Activated T-helper 1 cell treated with anti-CD3 and anti-CD28 coated beads, Interleukin-12 subunit alpha, Interleukin-12 subunit beta, Interleukin-2, Interleukin-4 antibody, amounts not matched to agents 30 ng/mL and 10 ng/mL and 1 ng/mL, durations not matched to agents 14 hours and 24 hours and 36 hours (primary cell): ENCODE measurements at regions of chr5 and their contacts with region 1.

Region 1: GRCh38 chr5:147453875-147454814 is 55.7 kb downstream of the DPYSL3 start:
- DNase-seq: peak; percentile 55
- H3K4me3 Mint-ChIP-seq: peak overlapping the region; percentile 80
- H3K27ac Mint-ChIP-seq: no peak overlapping the region
- H3K4me1 Mint-ChIP-seq: peaks cover 22% of the 10 kb centered on the region
- H3K27me3 Mint-ChIP-seq: peaks cover 53% of the 10 kb centered on the region

Region 2: GRCh38 chr5:147576646-147577535 is 122.7 kb after region 1 on chr5:
- intact Hi-C with region 1: loop called (anchors 2 kb)
- DNase-seq: peak; percentile 2
- H3K4me3 Mint-ChIP-seq: no peak overlapping the region
- H3K27ac Mint-ChIP-seq: no peak overlapping the region
- H3K4me1 Mint-ChIP-seq: no peaks in the 10 kb centered on the region
- H3K27me3 Mint-ChIP-seq: no peaks in the 10 kb centered on the region

Region 3: GRCh38 chr5:147628058-147628895 is 174.1 kb after region 1 on chr5:
- intact Hi-C with region 1: no loop called
- DNase-seq: peak; percentile 38
- H3K4me3 Mint-ChIP-seq: no peak overlapping the region
- H3K27ac Mint-ChIP-seq: no peak overlapping the region
- H3K4me1 Mint-ChIP-seq: no peaks in the 10 kb centered on the region
- H3K27me3 Mint-ChIP-seq: peaks cover 1% of the 10 kb centered on the region